HCT116 (cell line): ENCODE measurements at regions of chr14 and their contacts with region 1.

Region 1: GRCh38 chr14:35687335-35687939 is 121.7 kb downstream of the RALGAPA1 start:
- DNase-seq: peak; percentile 26
- ATAC-seq: peak; percentile 81
- H3K4me3 ChIP-seq: no peak overlapping the region
- H3K27ac ChIP-seq: no peak overlapping the region
- H3K4me1 ChIP-seq: no peaks in the 10 kb centered on the region
- H3K27me3 ChIP-seq: no peaks in the 10 kb centered on the region
- CTCF ChIP-seq: peak; percentile 81 to 91 (median 83); a peak in 5 of 6 replicates
- POLR2A ChIP-seq: no peak
- RAD21 ChIP-seq: peak; percentile 90

Region 2: GRCh38 chr14:34678306-34678705 is 1009.1 kb before region 1 on chr14:
- CTCF ChIA-PET with region 1: no interaction called
- POLR2A ChIA-PET with region 1: no interaction called
- RAD21 ChIA-PET with region 1: no interaction called
- intact Hi-C with region 1: loop called (anchors 10 kb)
- DNase-seq: no peak
- ATAC-seq: 0 out of 2 replicates have a peak, but pooled peaks have one; percentile 33
- H3K4me3 ChIP-seq: no peak overlapping the region
- H3K27ac ChIP-seq: no peak overlapping the region
- H3K4me1 ChIP-seq: peaks cover 10 to 21% of the 10 kb centered on the region in 2 experiments
- H3K27me3 ChIP-seq: no peaks in the 10 kb centered on the region
- CTCF ChIP-seq: no peak
- POLR2A ChIP-seq: no peak
- RAD21 ChIP-seq: no peak

Region 3: GRCh38 chr14:35140718-35141581 is 546.5 kb before region 1 on chr14:
- CTCF ChIA-PET with region 1: interaction called, 6 read pairs
- POLR2A ChIA-PET with region 1: no interaction called
- RAD21 ChIA-PET with region 1: no interaction called
- intact Hi-C with region 1: loop called (anchors 5 kb)
- DNase-seq: no peak
- ATAC-seq: no peak
- H3K4me3 ChIP-seq: no peak overlapping the region
- H3K27ac ChIP-seq: no peak overlapping the region
- H3K4me1 ChIP-seq: no peaks in the 10 kb centered on the region
- H3K27me3 ChIP-seq: no peaks in the 10 kb centered on the region
- CTCF ChIP-seq: peak in 2 of 3 experiments; percentile 39 to 46; a peak in 3 of 6 replicates
- POLR2A ChIP-seq: no peak
- RAD21 ChIP-seq: peak; percentile 60

Region 4: DNA sequence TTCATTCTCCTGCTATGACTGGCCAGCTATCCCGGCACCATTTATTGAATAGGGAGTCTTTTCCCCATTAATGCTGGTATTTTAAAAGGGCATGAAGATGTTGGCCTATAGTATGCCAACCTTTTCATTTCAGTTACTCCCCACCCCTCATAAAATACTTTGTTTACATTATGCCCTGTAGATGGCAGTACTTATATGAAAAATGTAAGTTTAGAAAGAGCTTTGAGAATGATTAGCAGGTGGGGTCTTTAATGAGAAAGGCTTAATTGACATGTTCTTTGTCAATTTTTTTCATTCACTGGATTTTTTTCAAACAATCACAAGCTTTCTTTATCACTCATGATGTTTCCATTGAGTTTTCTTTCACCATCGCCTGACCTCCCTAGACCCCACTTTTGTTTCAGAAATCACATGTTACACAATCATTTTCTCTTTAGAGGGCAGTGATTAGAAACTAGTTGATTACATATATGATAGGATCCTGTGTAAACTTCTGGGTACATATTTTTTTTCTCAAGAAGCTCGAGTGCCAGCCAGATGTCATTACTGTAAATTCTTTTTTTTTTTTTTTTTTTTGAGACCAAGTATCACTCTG is 457.8 kb before region 1 on chr14:
- CTCF ChIA-PET with region 1: no interaction called
- POLR2A ChIA-PET with region 1: no interaction called
- RAD21 ChIA-PET with region 1: no interaction called
- intact Hi-C with region 1: loop called (anchors 10 kb)
- DNase-seq: no peak
- ATAC-seq: peak; percentile 62; the same call in 1 of the 2 replicates
- H3K4me3 ChIP-seq: no peak overlapping the region
- H3K27ac ChIP-seq: no peak overlapping the region
- H3K4me1 ChIP-seq: no peaks in the 10 kb centered on the region
- H3K27me3 ChIP-seq: no peaks in the 10 kb centered on the region
- CTCF ChIP-seq: peak; percentile 25 to 52 (median 44); a peak in 4 of 6 replicates
- POLR2A ChIP-seq: no peak
- RAD21 ChIP-seq: peak; percentile 62

Region 5: GRCh38 chr14:35438910-35439713 is 248.3 kb before region 1 on chr14:
- CTCF ChIA-PET with region 1: interaction called, 15 read pairs
- POLR2A ChIA-PET with region 1: no interaction called
- RAD21 ChIA-PET with region 1: interaction called, 4 to 6 read pairs
- intact Hi-C with region 1: loop called (anchors 1 kb)
- DNase-seq: peak; percentile 31
- ATAC-seq: peak; percentile 73
- H3K4me3 ChIP-seq: no peak overlapping the region
- H3K27ac ChIP-seq: no peak overlapping the region
- H3K4me1 ChIP-seq: peaks cover 4 to 10% of the 10 kb centered on the region in 2 experiments; a peak in 3 of 4 replicates
- H3K27me3 ChIP-seq: no peaks in the 10 kb centered on the region
- CTCF ChIP-seq: peak; percentile 45 to 66 (median 65); a peak in 5 of 6 replicates
- POLR2A ChIP-seq: no peak
- RAD21 ChIP-seq: peak; percentile 56; the same call in 1 of the 2 replicates

Region 6: GRCh38 chr14:35988972-35989685 is 301.7 kb after region 1 on chr14:
- CTCF ChIA-PET with region 1: no interaction called
- POLR2A ChIA-PET with region 1: no interaction called
- RAD21 ChIA-PET with region 1: no interaction called
- intact Hi-C with region 1: no loop called
- DNase-seq: no peak
- ATAC-seq: peak; percentile 66
- H3K4me3 ChIP-seq: no peak overlapping the region
- H3K27ac ChIP-seq: no peak overlapping the region
- H3K4me1 ChIP-seq: peaks cover 0 to 8% of the 10 kb centered on the region in 2 experiments; a peak in 2 of 4 replicates
- H3K27me3 ChIP-seq: no peaks in the 10 kb centered on the region
- CTCF ChIP-seq: no peak
- POLR2A ChIP-seq: no peak
- RAD21 ChIP-seq: no peak